ENCODE measurements at regions of chr1 and their contacts with region 1.

Region 1: GRCh38 chr1:95043141-95043980 is 29.4 kb downstream of the ALG14 start:
- DNase-seq: peak; percentile 93
- H3K4me3 ChIP-seq: no peak overlapping the region
- H3K27ac ChIP-seq: peak overlapping the region; percentile 71 to 87
- H3K4me1 ChIP-seq: peaks cover 21% of the 10 kb centered on the region
- H3K27me3 ChIP-seq: no peaks in the 10 kb centered on the region
- CTCF ChIP-seq: peak; percentile 99
- POLR2A ChIP-seq: no peak

Region 2: GRCh38 chr1:94819941-94820746 is 223.2 kb before region 1 on chr1 and contains the start of gene SLC44A3:
- intact Hi-C with region 1: no loop called
- DNase-seq: peak; percentile 28
- H3K4me3 ChIP-seq: peak within 1 kb of the TSS; percentile 63 to 71
- H3K27ac ChIP-seq: no peak within 1 kb of the TSS
- H3K4me1 ChIP-seq: no peaks in the 10 kb centered on the region
- H3K27me3 ChIP-seq: no peaks in the 10 kb centered on the region
- CTCF ChIP-seq: no peak
- POLR2A ChIP-seq: no peak
- total RNA-seq, gene SLC44A3: 2.7 to 3.4 TPM

Region 3: DNA sequence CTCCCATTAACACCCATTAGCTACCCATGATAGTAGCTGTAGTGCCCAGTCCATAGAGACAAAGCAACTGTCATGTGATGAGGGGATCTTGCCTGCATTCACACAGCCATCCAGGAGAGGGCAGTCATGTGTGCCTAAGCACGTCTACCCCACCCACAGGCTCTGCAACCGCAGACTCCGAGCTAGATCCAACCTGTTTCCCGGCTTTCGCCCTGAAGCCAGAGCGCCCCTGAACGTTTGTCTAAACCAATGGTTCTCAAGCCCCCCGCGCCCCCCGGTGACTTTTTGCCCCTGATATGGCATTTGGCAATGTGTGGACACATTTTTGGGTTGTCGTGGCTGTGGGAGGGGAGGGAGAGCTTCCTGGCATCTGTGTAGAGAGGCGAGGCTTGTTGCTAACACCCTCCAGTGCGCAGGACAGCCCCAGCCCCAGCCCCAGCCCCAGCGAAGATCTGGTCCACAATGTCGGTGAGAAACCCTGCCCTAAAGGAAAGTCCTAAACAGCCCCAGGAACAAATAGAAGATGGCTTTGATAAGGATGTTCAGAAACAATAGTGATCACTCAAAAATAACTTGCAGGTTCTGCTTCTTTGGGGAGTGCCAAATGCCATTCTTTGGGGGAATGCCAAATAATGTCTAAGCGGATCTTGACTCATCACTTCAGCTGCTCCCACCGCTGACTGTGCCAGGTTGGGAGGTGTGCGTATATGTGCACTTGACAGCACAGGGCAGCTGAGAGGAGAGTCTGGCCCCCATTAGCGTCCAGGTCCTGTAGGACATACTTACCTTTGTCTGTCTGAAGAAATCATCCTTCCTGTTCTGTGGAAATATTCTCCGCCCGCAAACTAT is 188.7 kb before region 1 on chr1:
- intact Hi-C with region 1: loop called (anchors 10 kb)
- DNase-seq: peak; percentile 94
- H3K4me3 ChIP-seq: peak overlapping the region in 1 of 2 donors; percentile 39
- H3K27ac ChIP-seq: peak overlapping the region; percentile 42 to 69
- H3K4me1 ChIP-seq: peaks cover 14% of the 10 kb centered on the region
- H3K27me3 ChIP-seq: no peaks in the 10 kb centered on the region
- CTCF ChIP-seq: peak; percentile 83 to 93 (median 89)
- POLR2A ChIP-seq: no peak